ENCODE measurements at regions of chr2 and their contacts with region 1.

Region 1: GRCh38 chr2:142030735-142031134 is 100.1 kb downstream of the LRP1B start:
- DNase-seq: no peak
- ATAC-seq: no peak
- H3K4me3 ChIP-seq: no peak overlapping the region
- H3K27ac ChIP-seq: no peak overlapping the region
- H3K4me1 ChIP-seq: no peaks in the 10 kb centered on the region
- H3K27me3 ChIP-seq: no peaks in the 10 kb centered on the region
- CTCF ChIP-seq: no peak

Region 2: GRCh38 chr2:142012797-142013196 is 17.9 kb before region 1 on chr2:
- CTCF ChIA-PET with region 1: no interaction called
- POLR2A ChIA-PET with region 1: no interaction called
- in situ Hi-C with region 1: no loop called
- intact Hi-C with region 1: loop called (anchors 2 kb)
- DNase-seq: no peak
- ATAC-seq: no peak
- H3K4me3 ChIP-seq: no peak overlapping the region
- H3K27ac ChIP-seq: no peak overlapping the region
- H3K4me1 ChIP-seq: no peaks in the 10 kb centered on the region
- H3K27me3 ChIP-seq: no peaks in the 10 kb centered on the region
- CTCF ChIP-seq: no peak

Region 3: DNA sequence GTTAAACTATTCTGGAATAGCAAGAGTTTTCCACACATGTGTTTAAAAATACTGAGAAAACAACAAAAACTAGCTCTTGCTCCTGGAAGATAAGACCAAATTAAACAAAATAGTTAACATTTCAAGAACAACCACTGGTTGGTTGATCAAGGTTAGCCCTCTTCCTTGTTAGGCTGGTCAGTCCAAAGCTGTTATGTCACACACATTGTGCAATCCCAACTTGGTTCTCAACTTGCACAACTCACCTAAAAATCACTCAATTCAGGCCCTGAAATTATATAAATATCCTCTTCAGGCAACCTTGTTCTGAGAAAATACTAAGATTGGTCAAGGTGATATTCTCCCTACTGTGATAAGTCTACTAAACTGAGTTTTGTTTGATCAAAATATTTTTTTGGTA is 269.8 kb after region 1 on chr2:
- CTCF ChIA-PET with region 1: no interaction called
- POLR2A ChIA-PET with region 1: no interaction called
- in situ Hi-C with region 1: no loop called
- intact Hi-C with region 1: no loop called
- DNase-seq: no peak
- ATAC-seq: no peak
- H3K4me3 ChIP-seq: no peak overlapping the region
- H3K27ac ChIP-seq: no peak overlapping the region
- H3K4me1 ChIP-seq: no peaks in the 10 kb centered on the region
- H3K27me3 ChIP-seq: no peaks in the 10 kb centered on the region
- CTCF ChIP-seq: no peak